Sigmoid colon (tissue), 7 donors: ENCODE measurements at regions of chr1 and their contacts with region 1.

Region 1: DNA sequence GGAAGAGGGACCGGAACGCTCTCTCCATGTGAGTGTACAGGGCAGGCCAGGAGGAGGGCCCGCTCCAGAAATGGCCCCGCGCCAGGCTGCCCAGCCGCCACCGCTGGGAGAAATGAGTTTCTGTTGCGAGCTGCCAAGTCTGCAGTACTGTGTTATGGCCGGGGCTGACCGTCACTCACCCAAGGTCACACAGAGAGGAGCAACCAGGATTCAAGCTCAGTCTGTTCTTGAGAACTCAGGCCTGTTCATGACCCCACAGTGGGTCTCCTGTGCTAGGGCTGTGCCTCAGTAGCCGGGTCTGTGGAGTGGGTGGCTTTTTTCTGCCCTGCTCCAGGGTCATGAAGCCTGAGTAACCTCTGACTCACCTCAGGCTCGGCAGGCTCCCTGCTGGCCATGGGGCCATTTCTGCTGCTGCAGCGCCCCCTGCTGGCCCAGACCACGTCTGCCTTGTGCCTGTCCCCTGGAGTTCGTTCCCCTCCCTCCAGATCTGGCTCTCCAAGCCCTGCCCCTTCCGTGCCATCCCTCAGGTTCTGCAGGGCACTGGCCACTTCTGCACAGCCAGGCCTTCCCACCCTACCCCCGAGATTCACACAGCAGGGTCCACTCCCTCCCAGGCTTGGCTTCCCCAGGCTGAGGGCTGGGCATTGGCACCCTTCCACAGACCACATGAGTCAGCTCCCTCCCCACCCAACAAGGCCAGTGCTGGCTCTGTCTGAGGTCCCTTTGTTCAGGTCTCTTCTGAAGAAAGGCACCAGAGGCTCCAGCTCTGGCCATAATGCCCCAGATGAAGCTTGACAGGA is 51.8 kb downstream of the EDN2 start:
- DNase-seq: peak; percentile 91
- H3K4me3 ChIP-seq: no peak overlapping the region
- H3K27ac ChIP-seq: peak overlapping the region; percentile 53 to 74 (median 62)
- H3K4me1 ChIP-seq: peaks cover 0 to 38% (median 34%) of the 10 kb centered on the region in 4 donors
- H3K27me3 ChIP-seq: peaks cover 0 to 10% (median 0%) of the 10 kb centered on the region in 3 donors
- CTCF ChIP-seq: peak; percentile 67 to 87 (median 76)
- EP300 ChIP-seq: no peak
- POLR2A ChIP-seq: no peak

Region 2: GRCh38 chr1:41496080-41497055 is 63.7 kb after region 1 on chr1:
- intact Hi-C with region 1: loop called (anchors 5 kb)
- DNase-seq: peak; percentile 97
- H3K4me3 ChIP-seq: peak overlapping the region in 3 of 4 donors; percentile 39 to 44 (median 42)
- H3K27ac ChIP-seq: peak overlapping the region; percentile 88 to 92 (median 90)
- H3K4me1 ChIP-seq: peaks cover 0 to 62% (median 51%) of the 10 kb centered on the region in 4 donors
- H3K27me3 ChIP-seq: no peaks in the 10 kb centered on the region
- CTCF ChIP-seq: peak in 2 of 4 experiments; percentile 9 to 17
- EP300 ChIP-seq: peak; percentile 90 to 99 (median 97)
- POLR2A ChIP-seq: peak in 1 of 2 donors; percentile 58

Region 3: DNA sequence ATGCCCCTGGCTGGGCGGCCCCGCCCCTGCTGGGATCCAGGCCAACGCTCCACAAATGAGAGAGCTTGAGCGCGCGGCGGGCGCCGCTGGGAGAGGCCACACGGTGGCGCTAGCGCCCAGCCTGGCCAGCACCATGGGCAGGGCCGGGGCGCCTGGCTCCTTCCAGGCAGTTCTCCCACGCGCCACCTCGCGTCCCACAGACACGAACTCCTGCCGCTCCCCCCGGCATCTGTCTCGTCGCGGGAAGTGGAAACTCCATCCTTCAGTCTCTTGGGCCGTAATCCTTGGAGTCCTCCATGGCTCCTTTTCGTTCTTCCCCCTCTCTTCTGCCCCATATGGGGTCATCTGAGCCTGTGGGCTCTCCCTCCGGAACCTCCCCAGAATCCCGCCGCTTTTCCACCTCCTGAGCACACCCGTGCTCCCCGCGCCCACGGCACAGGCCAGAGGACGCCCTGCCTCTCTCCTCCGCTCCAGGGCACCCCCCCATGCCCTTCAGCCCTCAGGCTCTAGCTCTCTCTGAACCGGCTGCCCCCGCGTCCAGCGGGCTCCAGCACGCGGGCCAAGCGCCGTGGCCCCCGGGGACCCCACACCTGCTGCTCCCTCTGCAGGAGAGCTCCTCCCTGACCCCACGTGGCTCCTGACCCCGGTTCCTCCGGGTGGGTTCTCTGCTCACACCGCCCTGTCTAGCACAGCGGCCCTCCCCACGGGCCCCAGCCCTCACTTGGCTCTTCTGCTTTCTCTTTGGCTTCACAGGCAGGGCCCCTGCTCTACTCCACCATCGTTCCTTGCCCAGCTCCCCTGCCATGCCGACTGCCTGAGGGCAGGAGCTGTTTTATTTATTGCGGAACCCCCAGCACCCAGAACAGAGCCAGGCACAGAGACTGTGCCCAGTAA is 83.7 kb after region 1 on chr1:
- intact Hi-C with region 1: loop called (anchors 5 kb)
- DNase-seq: peak; percentile 94
- H3K4me3 ChIP-seq: peak overlapping the region; percentile 31 to 54 (median 48)
- H3K27ac ChIP-seq: peak overlapping the region in 2 of 4 donors; percentile 51 to 61
- H3K4me1 ChIP-seq: peaks cover 0 to 20% (median 17%) of the 10 kb centered on the region in 4 donors
- H3K27me3 ChIP-seq: no peaks in the 10 kb centered on the region
- CTCF ChIP-seq: peak; percentile 63 to 94 (median 80)
- EP300 ChIP-seq: no peak
- POLR2A ChIP-seq: no peak

Region 4: DNA sequence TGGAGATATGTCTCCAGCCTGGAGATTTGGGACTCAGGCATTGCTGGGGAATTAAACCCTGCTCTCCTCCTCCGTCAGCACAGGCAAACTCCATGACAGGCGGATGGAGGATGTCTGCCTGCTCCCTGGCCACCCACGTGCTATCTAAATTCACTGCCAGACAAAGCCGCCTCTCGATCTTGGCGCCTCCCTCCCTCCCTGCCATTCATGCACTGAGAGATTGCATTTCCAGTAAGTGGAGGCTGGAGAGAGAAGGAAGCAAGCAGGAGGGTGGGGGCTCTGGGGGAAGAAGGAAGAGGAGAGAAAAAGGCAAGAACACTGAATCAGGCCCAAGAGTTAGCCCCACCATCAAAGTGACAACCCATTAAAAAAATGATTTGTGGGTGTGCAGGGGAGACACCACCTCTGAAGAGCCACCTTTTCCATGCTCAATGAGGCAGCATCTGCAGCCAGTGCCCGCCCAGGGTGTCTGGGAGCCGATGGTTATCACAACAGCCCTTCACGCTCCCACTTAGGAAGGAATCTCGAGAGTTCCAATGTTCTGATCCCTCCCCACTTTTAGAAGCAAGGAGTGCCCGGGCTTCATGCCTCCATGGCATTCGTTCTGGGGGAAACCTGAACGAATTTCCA is 303.1 kb after region 1 on chr1:
- intact Hi-C with region 1: no loop called
- DNase-seq: no peak
- H3K4me3 ChIP-seq: no peak overlapping the region
- H3K27ac ChIP-seq: no peak overlapping the region
- H3K4me1 ChIP-seq: no peaks in the 10 kb centered on the region
- H3K27me3 ChIP-seq: no peaks in the 10 kb centered on the region
- CTCF ChIP-seq: no peak
- EP300 ChIP-seq: no peak
- POLR2A ChIP-seq: no peak